ENCODE measurements at regions of chr11 and their contacts with region 1.

Region 1: DNA sequence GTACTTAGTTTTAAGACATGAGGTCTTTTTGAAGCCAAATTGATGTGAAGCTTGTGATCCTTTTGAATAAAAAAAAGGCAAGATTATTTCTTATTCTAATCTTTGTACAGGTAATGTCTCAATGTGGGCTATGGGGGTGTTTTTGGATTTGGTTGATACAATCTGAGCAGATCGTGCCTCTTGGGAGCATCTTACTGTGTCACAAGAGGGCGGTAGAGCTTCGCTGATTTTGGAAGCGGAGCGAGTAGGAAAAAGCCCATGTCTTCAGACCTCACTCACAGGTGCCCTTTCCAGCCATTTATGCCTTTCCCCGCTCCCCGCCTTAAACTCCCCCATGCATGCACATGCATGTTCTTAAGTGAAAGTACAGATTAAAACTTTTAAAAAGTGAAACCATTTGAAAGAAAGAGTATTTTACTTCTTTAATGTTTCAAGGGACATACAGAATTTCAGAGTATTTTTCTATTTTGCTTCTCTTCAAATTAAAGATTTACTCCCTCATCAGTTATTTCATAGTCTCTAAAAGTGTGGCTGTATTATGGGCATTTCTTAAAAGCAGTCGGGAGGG is 18.8 kb downstream of the DDX25 start:
- DNase-seq: peak; percentile 58 to 70
- ATAC-seq: peak; percentile 43

Region 2: DNA sequence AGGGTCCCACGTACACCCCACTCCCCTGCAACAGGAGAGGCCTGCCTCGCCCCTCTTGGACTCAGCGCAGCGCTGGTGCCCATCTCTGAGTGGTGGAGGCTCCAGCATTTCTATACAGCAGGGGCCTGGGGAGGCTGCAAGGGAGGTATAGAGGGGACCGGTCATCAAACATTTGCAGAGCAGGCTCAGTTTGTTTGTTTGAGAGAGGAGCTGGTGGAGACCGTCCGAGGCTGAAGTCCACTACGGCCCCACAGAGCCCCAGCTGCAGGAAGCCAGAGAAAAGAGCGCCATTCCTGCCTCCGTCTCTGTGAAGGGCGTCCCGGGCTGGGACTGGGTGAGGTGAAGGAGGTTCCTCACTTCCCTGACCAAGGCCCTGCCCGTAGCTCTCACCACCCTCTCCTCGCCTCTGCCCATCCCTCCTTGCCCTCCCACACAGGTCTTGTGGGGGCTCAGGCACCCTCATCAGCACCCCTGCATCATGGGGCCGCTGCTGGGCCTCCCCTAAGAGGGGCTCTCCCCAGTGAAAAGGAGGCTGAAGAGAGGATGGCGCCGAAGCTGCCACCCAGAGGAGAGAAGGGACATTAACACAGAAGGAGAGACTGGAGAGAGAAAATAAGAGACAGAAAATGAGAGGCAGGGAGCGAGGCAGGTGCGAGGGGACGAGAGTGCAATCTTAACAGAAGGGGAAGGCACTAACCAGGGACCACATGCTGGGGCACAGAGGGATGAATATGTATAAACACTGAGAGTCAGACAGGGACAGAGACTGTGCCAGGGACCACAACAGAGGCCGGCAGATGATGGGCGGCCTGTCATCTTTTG is 263.8 kb after region 1 on chr11:
- intact Hi-C with region 1: loop called in 1 of 2 experiments (anchors 5 kb)
- DNase-seq: no peak
- ATAC-seq: no peak

Region 3: GRCh38 chr11:126194121-126194543 is 271.0 kb after region 1 on chr11:
- intact Hi-C with region 1: loop called (anchors 2 to 5 kb)
- DNase-seq: no peak
- ATAC-seq: peak; percentile 77

Region 4: DNA sequence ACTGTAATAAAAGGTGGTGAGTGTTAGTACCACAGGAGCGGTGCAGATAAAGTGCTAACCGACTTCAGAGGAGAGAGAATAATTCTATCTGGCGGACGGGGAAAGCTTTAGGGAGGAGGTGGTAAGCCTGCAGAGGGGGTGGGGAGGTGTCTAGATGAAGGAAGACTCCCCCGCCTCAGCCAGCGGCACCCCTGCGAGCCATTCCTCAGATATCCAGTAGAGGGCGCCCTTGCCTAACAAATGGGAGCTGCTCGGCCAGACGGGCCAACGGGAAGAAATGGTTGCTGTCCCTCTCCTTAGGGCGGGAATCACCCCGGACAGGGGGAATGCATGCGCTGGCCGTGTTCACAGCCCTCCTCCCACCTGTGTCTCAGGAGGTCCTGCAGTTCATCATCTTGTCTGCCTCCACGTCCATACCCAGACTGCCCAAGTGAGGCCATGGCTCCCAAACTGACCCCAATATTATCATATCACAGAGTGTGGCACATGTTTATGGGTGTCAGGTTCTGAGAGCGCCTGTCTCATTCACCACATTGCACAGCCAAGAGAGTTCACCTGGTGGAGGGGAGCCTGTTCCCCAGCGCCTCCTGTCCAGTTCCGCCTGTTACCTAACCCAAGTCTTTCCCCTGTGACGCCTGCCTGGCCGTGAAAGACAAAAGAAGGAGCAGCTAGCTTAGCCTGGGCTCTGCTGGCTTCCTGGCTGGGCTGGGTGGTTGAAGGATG is 517.9 kb after region 1 on chr11:
- intact Hi-C with region 1: no loop called
- DNase-seq: peak; percentile 70 to 77
- ATAC-seq: peak; percentile 89

Measured in left colon (tissue), 2 donors.